CD8-positive, alpha-beta memory T cell (primary cell): ENCODE measurements at regions of chr19 and their contacts with region 1.

Region 1: GRCh38 chr19:39352381-39353255 is 10.4 kb downstream of the SAMD4B start:
- DNase-seq: no peak
- H3K4me3 ChIP-seq: no peak overlapping the region
- H3K4me3 Mint-ChIP-seq: no peak overlapping the region
- H3K27ac ChIP-seq: no peak overlapping the region
- H3K27ac Mint-ChIP-seq: peak overlapping the region in 4 of 8 donors; percentile 23 to 82 (median 71)
- H3K4me1 ChIP-seq: no peaks in the 10 kb centered on the region
- H3K4me1 Mint-ChIP-seq: peaks cover 20 to 34% (median 22%) of the 10 kb centered on the region in 3 donors
- H3K27me3 ChIP-seq: no peaks in the 10 kb centered on the region
- H3K27me3 Mint-ChIP-seq: peaks cover 0 to 1% of the 10 kb centered on the region in 2 donors

Region 2: GRCh38 chr19:39277612-39278011 is 75.0 kb before region 1 on chr19:
- CTCF ChIA-PET with region 1: no interaction called
- POLR2A ChIA-PET with region 1: no interaction called
- DNase-seq: no peak
- H3K4me3 ChIP-seq: no peak overlapping the region
- H3K4me3 Mint-ChIP-seq: no peak overlapping the region
- H3K27ac ChIP-seq: no peak overlapping the region
- H3K27ac Mint-ChIP-seq: peak overlapping the region in 2 of 8 donors; percentile 66 to 69
- H3K4me1 ChIP-seq: no peaks in the 10 kb centered on the region
- H3K4me1 Mint-ChIP-seq: no peaks in the 10 kb centered on the region
- H3K27me3 ChIP-seq: no peaks in the 10 kb centered on the region
- H3K27me3 Mint-ChIP-seq: peaks cover 4 to 6% of the 10 kb centered on the region in 2 donors

Region 3: DNA sequence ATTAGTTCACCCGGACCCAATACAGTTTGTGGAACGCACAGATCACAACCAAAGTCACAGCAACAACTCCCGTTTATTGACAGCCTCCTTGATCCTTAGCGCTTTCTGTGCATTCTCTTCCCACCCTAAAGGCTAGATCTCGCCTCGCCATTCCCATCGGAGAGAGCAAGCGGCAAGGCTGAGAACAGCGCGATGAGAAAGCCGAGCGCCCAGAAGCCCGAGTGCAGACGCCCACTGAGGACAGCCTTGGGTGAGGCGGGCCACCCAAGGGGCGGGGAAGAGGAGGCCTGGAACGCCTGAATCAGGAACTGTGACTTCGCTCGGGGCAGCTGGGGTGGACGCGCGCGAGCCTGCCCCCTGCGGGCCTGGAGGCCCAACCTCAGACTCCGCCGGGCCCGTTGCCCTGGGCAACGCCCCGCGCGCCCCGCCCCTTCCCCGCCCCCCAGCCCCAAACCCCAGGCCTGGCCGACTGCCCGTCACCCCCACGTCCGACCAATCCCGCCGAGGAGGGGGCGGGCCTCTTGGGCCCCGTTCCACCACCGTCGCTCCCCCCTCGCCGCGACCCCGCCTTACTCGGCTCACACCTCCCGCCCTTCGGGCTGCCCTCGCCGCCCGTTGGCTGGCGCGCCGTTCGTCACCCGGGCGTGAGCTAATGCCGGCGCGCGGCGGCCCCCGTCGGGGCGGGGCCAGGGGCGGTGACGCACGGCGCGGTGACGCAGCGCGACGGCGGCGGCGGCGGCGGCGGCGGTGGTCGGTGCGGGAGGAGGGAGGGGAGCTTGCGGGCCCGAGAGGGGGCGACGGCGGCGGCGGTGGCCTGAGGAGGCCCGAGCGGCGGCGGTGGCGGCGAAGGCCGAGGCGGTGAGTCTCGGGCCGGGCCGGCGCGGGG is 10.7 kb before region 1 on chr19 and contains the start of gene SAMD4B:
- CTCF ChIA-PET with region 1: interaction called, 10 read pairs
- POLR2A ChIA-PET with region 1: no interaction called
- DNase-seq: peak; percentile 99 to 100 (median 100)
- H3K4me3 ChIP-seq: peak within 1 kb of the TSS; percentile 97
- H3K4me3 Mint-ChIP-seq: peak within 1 kb of the TSS; percentile 89 to 99 (median 95)
- H3K27ac ChIP-seq: peak within 1 kb of the TSS; percentile 86
- H3K27ac Mint-ChIP-seq: peak within 1 kb of the TSS; percentile 90 to 99 (median 94)
- H3K4me1 ChIP-seq: peaks cover 57% of the 10 kb centered on the region
- H3K4me1 Mint-ChIP-seq: peaks cover 55 to 75% (median 74%) of the 10 kb centered on the region in 3 donors
- H3K27me3 ChIP-seq: no peaks in the 10 kb centered on the region
- H3K27me3 Mint-ChIP-seq: peaks cover 0 to 1% of the 10 kb centered on the region in 2 donors
- total RNA-seq, gene SAMD4B: 54.3 to 55.6 TPM

Region 4: GRCh38 chr19:39397360-39398296 is 45.0 kb after region 1 on chr19:
- CTCF ChIA-PET with region 1: no interaction called
- POLR2A ChIA-PET with region 1: no interaction called
- DNase-seq: peak; percentile 87 to 94 (median 92)
- H3K4me3 ChIP-seq: peak overlapping the region; percentile 68
- H3K4me3 Mint-ChIP-seq: peak overlapping the region; percentile 70 to 89 (median 79)
- H3K27ac ChIP-seq: peak overlapping the region; percentile 45
- H3K27ac Mint-ChIP-seq: peak overlapping the region; percentile 91 to 100 (median 97)
- H3K4me1 ChIP-seq: peaks cover 54% of the 10 kb centered on the region
- H3K4me1 Mint-ChIP-seq: peaks cover 41 to 67% (median 54%) of the 10 kb centered on the region in 3 donors
- H3K27me3 ChIP-seq: no peaks in the 10 kb centered on the region
- H3K27me3 Mint-ChIP-seq: no peaks in the 10 kb centered on the region